ENCODE measurements at regions of chr22 and their contacts with region 1.

Region 1: DNA sequence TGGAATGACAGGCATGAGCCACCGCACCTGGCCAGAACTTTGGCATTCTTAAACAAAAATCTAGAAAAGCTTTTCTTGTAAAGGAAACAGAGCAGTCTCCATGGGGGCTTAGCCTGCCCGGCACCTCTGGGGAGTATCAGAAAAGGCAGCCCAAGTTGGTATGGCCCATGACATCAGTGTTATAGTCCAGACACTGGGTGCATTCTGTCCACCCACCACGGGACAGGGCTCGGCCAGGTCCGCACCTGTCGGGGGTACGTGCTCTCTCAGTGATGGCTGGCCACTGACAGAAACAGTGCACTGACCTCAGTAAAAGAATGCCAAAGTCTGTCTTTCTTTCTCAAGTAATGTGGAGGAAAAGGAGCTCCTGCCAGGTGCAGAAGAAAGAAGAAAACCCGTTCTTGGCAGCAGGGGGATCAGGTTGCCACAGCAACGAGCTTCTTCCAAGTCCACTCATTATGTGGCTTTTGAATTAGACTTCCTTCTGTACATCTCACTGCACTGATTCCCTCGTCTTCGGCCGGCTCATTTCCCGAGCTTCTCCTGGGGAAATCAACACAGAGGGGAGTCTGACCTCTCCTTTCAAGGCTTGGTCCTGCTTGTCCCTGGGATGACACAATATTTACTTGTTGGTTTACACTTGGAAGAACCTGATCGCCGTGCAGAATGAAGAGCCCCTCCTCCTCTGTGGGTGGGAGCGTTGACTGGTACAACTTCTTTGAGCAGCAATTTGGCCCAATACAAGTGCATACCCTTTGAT is 35.1 kb downstream of the MCHR1 start:
- DNase-seq: no peak
- CTCF ChIP-seq: no peak

Region 2: GRCh38 chr22:40463017-40463631 is 251.2 kb before region 1 on chr22:
- CTCF ChIA-PET with region 1: no interaction called
- POLR2A ChIA-PET with region 1: no interaction called
- DNase-seq: peak; percentile 61
- CTCF ChIP-seq: no peak

Region 3: DNA sequence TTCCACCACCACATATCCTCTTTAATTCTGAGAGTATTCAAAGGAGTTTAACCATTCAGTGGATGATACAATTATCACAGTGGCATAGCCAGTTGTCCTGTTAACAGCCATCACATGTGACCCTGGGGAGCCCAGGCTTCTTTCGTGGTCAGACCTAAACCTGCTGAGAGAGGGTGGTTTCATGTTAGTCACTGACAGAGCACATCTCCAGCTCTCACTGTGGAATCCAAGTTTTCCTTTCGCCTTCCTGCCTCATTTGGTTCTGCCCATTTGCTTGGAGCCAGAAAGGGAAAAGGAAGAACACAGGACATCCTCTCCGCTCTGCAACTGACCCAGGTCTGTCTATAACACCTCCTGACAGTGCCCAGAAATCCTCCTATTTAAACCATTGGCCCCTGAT is 25.3 kb after region 1 on chr22:
- CTCF ChIA-PET with region 1: interaction called, 3 read pairs
- POLR2A ChIA-PET with region 1: interaction called, 10 read pairs
- DNase-seq: no peak
- CTCF ChIP-seq: no peak